PC-3 (cell line): ENCODE measurements at regions of chr3 and their contacts with region 1.

Region 1: DNA sequence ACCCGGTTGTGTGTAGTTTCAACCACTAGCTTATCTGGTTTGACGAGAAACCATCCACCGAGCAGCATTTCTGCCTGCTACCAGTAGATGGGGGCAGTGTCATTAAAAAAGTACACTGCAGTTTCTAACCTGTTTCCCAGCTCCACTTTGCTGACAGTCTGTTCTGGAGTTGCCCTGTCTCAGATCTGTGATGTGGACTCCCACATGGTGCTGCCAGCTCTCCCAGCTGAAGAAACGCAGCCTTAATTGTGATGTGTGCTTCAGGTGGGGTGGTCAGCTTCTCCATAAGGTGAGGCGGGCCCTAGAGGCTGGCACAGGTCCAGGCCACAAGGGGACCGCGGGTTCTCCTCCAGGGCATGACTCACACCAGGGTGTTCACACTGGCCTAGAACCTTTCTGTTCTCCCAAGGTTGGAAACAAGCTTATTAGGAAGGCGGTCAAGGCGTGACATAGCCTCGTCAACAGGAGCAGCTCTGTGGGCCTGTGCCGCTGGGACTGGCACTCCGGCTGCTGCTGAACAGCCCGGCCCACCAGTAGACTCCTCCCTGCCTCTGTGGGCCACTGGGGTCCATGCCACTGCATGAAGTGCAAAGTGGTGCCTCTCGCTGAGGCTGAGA is 2.9 kb upstream of the FAM43A start:
- DNase-seq: peak; percentile 97
- ATAC-seq: peak; percentile 54
- H3K4me3 ChIP-seq: no peak overlapping the region; the same call in 1 of the 2 replicates
- H3K27ac ChIP-seq: peak overlapping the region; percentile 60
- H3K4me1 ChIP-seq: peaks cover 20% of the 10 kb centered on the region
- H3K27me3 ChIP-seq: no peaks in the 10 kb centered on the region
- CTCF ChIP-seq: peak; percentile 98

Region 2: DNA sequence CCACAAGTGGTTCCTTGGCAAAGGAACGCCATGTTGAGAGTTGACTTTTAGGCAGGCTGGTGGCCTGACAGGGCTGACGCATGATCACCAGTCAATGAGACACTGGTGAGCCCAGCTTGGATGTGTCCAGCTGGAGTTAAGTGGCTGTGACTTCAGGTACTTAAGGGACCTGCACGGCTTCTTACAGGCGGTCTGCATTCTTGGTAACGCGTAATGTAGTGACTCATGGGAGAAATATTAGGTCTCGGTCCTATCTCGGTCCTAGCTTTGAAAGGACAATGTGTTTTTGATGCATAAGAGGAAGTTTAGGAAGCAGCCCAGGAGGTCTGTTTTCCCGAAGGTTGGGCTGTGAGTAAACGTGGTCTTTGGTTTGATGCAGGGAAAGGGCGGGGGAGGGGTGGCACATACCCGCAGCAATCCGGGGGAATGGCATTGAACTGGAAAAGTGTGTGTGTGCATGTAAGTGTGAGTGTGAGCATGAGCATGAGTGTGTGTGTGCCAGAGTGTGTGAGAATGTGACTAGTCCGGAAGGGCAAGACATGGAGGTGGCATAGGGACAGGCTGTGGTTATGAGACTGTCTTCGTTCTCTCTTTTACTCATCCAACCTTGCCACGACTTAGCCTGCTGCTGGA is 58.2 kb after region 1 on chr3:
- CTCF ChIA-PET with region 1: interaction called, 6 read pairs
- POLR2A ChIA-PET with region 1: no interaction called
- intact Hi-C with region 1: loop called (anchors 1 kb)
- DNase-seq: peak; percentile 96
- ATAC-seq: peak; percentile 78
- H3K4me3 ChIP-seq: peak overlapping the region; percentile 35; the same call in 1 of the 2 replicates
- H3K27ac ChIP-seq: peak overlapping the region; percentile 82
- H3K4me1 ChIP-seq: peaks cover 46% of the 10 kb centered on the region
- H3K27me3 ChIP-seq: no peaks in the 10 kb centered on the region
- CTCF ChIP-seq: no peak

Region 3: DNA sequence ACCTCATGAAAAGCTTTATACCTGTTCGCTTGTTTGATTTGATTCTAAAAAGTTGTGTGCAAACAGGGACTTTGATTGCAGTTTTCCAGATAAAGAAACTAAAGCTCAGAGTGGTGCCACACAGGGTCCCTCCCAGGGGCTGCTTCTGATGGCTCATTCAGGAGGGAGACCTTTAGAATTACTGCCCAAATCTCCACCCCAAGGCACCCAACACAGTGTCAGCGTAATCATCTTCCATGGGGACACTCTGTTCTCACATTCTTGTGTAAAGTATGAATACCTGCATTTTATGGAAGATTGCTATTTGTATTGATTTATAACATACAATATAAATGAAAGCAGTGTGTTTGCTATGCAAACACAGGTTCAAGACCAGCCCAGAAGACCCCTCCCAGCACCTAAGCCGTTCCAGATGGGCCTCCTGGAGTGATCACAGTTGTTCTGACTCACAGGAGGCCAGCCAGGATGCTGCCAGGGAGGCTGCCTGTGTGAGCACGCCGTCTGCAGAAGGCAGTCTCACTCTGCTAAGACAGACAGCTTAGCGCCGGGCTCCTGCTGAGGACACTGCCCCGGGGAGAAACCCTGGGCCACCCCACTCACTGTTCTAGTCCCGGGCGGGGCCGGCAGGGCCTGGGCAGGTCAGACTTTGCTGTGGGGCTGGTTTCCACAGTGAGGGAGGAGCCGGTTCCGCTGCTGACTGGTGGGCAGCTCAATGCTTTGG is 188.5 kb after region 1 on chr3:
- CTCF ChIA-PET with region 1: interaction called, 25 read pairs
- POLR2A ChIA-PET with region 1: interaction called, 5 read pairs
- intact Hi-C with region 1: loop called (anchors 1 kb)
- DNase-seq: peak; percentile 89
- ATAC-seq: peak; percentile 69
- H3K4me3 ChIP-seq: peak overlapping the region; percentile 41; the same call in 1 of the 2 replicates
- H3K27ac ChIP-seq: peak overlapping the region; percentile 96
- H3K4me1 ChIP-seq: peaks cover 51% of the 10 kb centered on the region
- H3K27me3 ChIP-seq: no peaks in the 10 kb centered on the region
- CTCF ChIP-seq: no peak; the same call in 1 of the 2 replicates

Region 4: DNA sequence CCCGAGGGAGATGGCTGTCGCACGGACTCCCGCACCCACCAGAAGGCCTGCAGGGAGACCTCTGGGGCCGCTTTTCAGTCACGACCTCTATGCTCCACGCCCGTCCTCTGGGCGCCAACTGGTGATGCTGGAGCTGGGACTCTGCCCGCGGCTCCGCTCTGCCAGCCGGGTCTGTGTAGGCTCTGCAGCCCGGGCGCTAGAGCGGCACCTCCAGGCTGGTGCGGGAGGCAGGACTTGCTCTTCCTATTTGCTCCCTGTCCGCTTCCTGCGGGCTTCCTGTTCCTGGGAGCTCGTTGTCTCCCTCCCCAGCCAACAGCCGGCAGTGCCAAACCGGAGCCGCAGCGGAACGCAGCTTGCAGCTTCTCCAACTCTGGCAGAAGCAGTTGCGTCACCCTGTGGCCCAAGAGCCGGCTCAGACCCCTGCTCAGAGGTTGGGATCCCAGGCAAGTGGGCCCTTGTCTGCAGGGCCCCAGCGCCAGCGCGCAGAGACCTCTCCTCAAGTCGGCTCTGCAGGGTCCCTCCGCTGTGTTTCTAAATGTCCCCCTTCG is 302.3 kb after region 1 on chr3:
- CTCF ChIA-PET with region 1: interaction called, 34 read pairs
- POLR2A ChIA-PET with region 1: no interaction called
- intact Hi-C with region 1: loop called (anchors 1 kb)
- DNase-seq: peak; percentile 86
- ATAC-seq: peak; percentile 84
- H3K4me3 ChIP-seq: peak overlapping the region; percentile 51; the same call in 1 of the 2 replicates
- H3K27ac ChIP-seq: peak overlapping the region; percentile 10; the same call in 1 of the 2 replicates
- H3K4me1 ChIP-seq: peaks cover 43% of the 10 kb centered on the region
- H3K27me3 ChIP-seq: no peaks in the 10 kb centered on the region
- CTCF ChIP-seq: peak; percentile 68

Region 5: DNA sequence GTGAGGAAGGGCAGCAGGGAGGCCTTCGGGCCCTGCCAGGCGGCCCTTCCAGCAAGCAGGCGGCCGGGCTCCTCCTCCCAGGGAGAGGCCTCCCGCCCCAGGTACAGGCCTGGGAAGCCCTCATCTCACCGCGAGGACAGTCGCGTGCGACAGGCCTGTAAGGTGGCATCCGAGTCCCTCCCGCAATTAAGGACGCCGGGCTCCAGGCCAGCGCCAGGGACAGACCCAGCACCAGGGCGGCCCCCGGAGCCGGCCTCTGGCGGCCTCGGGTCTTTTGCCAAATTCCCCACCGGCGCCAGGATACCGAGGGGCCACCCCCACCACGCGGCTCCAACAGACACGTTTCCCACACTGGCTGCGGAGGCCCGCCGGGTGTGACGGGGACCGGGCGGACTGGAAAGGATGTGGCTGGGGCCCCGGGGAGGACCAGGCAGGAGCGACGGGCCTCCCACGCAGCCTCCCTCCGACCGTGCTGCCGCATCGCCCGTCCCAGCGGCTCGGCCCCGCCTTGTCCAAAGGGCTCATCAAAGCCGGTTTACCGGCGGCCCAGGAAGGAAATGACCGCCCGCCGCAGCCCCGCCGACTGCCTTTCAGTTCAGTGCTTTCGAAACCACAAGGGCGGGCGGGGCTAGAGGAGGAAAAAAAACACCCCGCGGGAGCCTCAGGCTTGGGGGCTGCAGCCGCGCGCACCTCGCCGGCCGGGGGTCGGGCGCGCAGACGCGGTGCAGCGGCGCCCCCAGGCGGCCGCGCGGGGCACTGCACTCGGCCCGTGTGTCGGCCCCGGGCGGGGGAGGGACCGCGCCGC is 576.9 kb after region 1 on chr3:
- CTCF ChIA-PET with region 1: interaction called, 10 read pairs
- POLR2A ChIA-PET with region 1: interaction called, 3 read pairs
- intact Hi-C with region 1: loop called (anchors 1 kb)
- DNase-seq: peak; percentile 91
- ATAC-seq: peak; percentile 74
- H3K4me3 ChIP-seq: peak overlapping the region; percentile 92
- H3K27ac ChIP-seq: peak overlapping the region; percentile 73
- H3K4me1 ChIP-seq: peaks cover 16% of the 10 kb centered on the region
- H3K27me3 ChIP-seq: no peaks in the 10 kb centered on the region
- CTCF ChIP-seq: peak; percentile 46; the same call in 1 of the 2 replicates